Transverse colon (tissue), 4 donors: ENCODE measurements at regions of chr5 and their contacts with region 1.

Region 1: GRCh38 chr5:59174248-59174844 is 591.5 kb downstream of the RAB3C start:
- DNase-seq: no peak
- H3K4me3 ChIP-seq: no peak overlapping the region
- H3K27ac ChIP-seq: no peak overlapping the region
- H3K4me1 ChIP-seq: peaks cover 0 to 4% (median 0%) of the 10 kb centered on the region in 4 donors
- H3K27me3 ChIP-seq: no peaks in the 10 kb centered on the region
- CTCF ChIP-seq: peak; percentile 74 to 80 (median 78)
- EP300 ChIP-seq: no peak
- POLR2A ChIP-seq: no peak

Region 2: DNA sequence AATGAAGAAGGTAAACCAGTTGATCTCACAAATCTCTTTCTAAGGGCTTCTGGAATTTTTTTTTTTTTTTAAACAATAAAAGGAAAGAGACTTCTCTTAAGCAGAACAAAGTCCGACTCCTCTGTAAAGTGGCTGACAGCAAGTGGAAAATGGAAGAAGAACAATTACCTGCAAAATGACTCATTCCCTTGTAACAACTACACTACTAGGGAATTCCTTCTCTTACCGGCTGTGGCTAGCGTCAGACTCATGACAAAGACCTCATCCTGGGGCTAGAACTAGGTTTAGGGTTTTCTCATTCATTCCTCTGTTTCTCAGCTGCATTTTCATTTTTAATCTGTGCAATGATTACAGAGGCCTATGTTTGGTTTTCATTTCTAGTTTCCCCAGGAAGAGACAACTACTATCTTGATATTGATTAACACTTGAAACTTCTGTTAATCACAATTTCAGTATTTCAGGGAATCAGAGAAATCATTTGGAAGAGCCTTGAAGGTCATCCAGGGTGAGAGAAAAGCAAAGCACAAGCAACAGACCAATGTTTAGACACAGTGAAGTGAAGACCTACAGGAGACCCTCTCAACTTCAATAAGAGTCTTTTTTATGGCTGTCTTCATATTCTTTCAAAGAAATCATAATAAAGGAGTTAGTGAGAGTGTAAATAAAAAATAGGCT is 153.6 kb before region 1 on chr5:
- in situ Hi-C with region 1: loop called in 2 of 4 experiments (anchors 10 to 25 kb)
- intact Hi-C with region 1: no loop called
- DNase-seq: peak; percentile 19
- H3K4me3 ChIP-seq: no peak overlapping the region
- H3K27ac ChIP-seq: peak overlapping the region; percentile 47 to 74 (median 65)
- H3K4me1 ChIP-seq: peaks cover 6 to 29% (median 22%) of the 10 kb centered on the region in 4 donors
- H3K27me3 ChIP-seq: no peaks in the 10 kb centered on the region
- CTCF ChIP-seq: no peak
- EP300 ChIP-seq: no peak
- POLR2A ChIP-seq: no peak